Mammary epithelial cell (primary cell): ENCODE measurements at regions of chr10 and their contacts with region 1.

Region 1: GRCh38 chr10:4109469-4109868 is 324.5 kb upstream of the KLF6 start:
- DNase-seq: no peak
- H3K4me3 ChIP-seq: no peak overlapping the region
- H3K27ac ChIP-seq: no peak overlapping the region
- H3K4me1 ChIP-seq: no peaks in the 10 kb centered on the region
- H3K27me3 ChIP-seq: no peaks in the 10 kb centered on the region
- CTCF ChIP-seq: no peak

Region 2: GRCh38 chr10:3972460-3973301 is 136.8 kb before region 1 on chr10:
- CTCF ChIA-PET with region 1: no interaction called
- dilution Hi-C with region 1: no loop called
- in situ Hi-C with region 1: no loop called
- intact Hi-C with region 1: no loop called
- DNase-seq: no peak
- H3K4me3 ChIP-seq: no peak overlapping the region
- H3K27ac ChIP-seq: no peak overlapping the region
- H3K4me1 ChIP-seq: peaks cover 2% of the 10 kb centered on the region
- H3K27me3 ChIP-seq: no peaks in the 10 kb centered on the region
- CTCF ChIP-seq: no peak

Region 3: DNA sequence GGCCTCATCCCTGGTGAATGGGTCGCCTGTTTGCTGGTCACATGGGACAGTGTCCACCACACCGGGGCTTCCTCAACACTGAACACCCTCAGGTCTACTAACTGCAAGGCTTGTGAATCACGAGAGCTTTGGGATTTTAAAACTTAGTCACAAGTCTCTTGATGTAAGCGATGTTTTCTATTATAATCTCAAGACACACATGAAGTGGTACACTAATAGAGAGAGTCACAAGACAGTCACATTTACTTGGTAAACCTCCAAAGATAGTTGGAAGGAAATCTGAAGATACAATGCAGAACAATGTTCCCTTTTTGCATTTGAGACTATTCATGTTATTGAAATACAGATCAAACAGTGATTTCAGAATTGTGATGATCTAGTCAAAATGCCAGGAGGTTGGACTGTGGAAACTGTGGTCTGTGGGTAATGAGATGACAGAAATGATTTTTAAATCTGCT is 91.4 kb before region 1 on chr10:
- CTCF ChIA-PET with region 1: no interaction called
- dilution Hi-C with region 1: loop called (anchors 5 kb)
- in situ Hi-C with region 1: no loop called
- intact Hi-C with region 1: no loop called
- DNase-seq: no peak
- H3K4me3 ChIP-seq: no peak overlapping the region
- H3K27ac ChIP-seq: no peak overlapping the region
- H3K4me1 ChIP-seq: no peaks in the 10 kb centered on the region
- H3K27me3 ChIP-seq: no peaks in the 10 kb centered on the region
- CTCF ChIP-seq: no peak

Region 4: GRCh38 chr10:4073912-4074311 is 35.6 kb before region 1 on chr10:
- CTCF ChIA-PET with region 1: no interaction called
- dilution Hi-C with region 1: loop called (anchors 5 kb)
- in situ Hi-C with region 1: no loop called
- intact Hi-C with region 1: no loop called
- DNase-seq: peak; percentile 53
- H3K4me3 ChIP-seq: no peak overlapping the region
- H3K27ac ChIP-seq: peak overlapping the region; percentile 71
- H3K4me1 ChIP-seq: peaks cover 40% of the 10 kb centered on the region
- H3K27me3 ChIP-seq: no peaks in the 10 kb centered on the region
- CTCF ChIP-seq: no peak